ENCODE measurements at regions of chr6 and their contacts with region 1.

Region 1: GRCh38 chr6:141562851-141563763 is 569.6 kb upstream of the GJE1 start:
- DNase-seq: peak; percentile 87
- H3K4me3 Mint-ChIP-seq: peak overlapping the region; percentile 83
- H3K27ac Mint-ChIP-seq: peak overlapping the region; percentile 35
- H3K4me1 Mint-ChIP-seq: peaks cover 19% of the 10 kb centered on the region
- H3K27me3 Mint-ChIP-seq: peaks cover 2% of the 10 kb centered on the region

Region 2: GRCh38 chr6:139881728-139882211 is 1681.3 kb before region 1 on chr6:
- intact Hi-C with region 1: loop called (anchors 5 kb)
- DNase-seq: peak; percentile 71
- H3K4me3 Mint-ChIP-seq: no peak overlapping the region
- H3K27ac Mint-ChIP-seq: no peak overlapping the region
- H3K4me1 Mint-ChIP-seq: peaks cover 4% of the 10 kb centered on the region
- H3K27me3 Mint-ChIP-seq: peaks cover 4% of the 10 kb centered on the region

Region 3: GRCh38 chr6:141153563-141153962 is 409.5 kb before region 1 on chr6:
- intact Hi-C with region 1: loop called (anchors 10 kb)
- DNase-seq: peak; percentile 59
- H3K4me3 Mint-ChIP-seq: no peak overlapping the region
- H3K27ac Mint-ChIP-seq: no peak overlapping the region
- H3K4me1 Mint-ChIP-seq: peaks cover 3% of the 10 kb centered on the region
- H3K27me3 Mint-ChIP-seq: no peaks in the 10 kb centered on the region

Region 4: GRCh38 chr6:141309295-141309694 is 253.8 kb before region 1 on chr6:
- intact Hi-C with region 1: loop called (anchors 1 kb)
- DNase-seq: no peak
- H3K4me3 Mint-ChIP-seq: no peak overlapping the region
- H3K27ac Mint-ChIP-seq: no peak overlapping the region
- H3K4me1 Mint-ChIP-seq: no peaks in the 10 kb centered on the region
- H3K27me3 Mint-ChIP-seq: no peaks in the 10 kb centered on the region

Region 5: DNA sequence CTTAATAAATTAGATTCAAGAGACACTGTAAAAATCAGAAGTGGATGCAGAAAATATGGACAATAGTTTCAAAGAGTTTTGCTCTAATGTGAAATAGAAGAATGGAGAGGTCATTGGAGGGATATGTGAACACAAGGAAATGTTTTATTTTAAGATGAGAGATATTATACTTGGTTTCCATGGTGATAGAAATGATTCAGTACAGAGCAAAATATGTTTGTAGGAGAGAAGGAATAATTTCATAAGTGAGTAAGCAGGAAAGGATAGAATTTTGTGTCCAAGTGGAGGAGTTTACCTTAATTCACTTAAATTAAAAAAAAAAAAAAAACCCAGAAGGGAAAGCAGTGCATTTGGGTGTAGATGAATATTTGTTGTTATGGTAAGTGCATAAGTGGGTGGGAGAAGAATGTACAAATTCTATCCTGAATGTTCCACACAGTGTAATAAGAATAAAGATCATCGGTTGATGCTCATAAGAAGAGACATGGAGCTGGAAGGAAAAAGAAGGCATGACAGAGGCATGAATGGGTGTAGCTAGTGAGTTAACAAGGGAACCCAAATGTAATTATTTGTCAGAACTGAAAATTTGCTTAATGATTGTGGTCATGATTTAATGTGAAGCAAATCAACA is 119.3 kb before region 1 on chr6:
- intact Hi-C with region 1: loop called (anchors 5 kb)
- DNase-seq: no peak
- H3K4me3 Mint-ChIP-seq: no peak overlapping the region
- H3K27ac Mint-ChIP-seq: no peak overlapping the region
- H3K4me1 Mint-ChIP-seq: no peaks in the 10 kb centered on the region
- H3K27me3 Mint-ChIP-seq: peaks cover 5% of the 10 kb centered on the region

Measured in activated CD4-positive, alpha-beta T cell treated with anti-CD3 and anti-CD28 coated beads, Interleukin-2, amount 10 ng/mL, durations not matched to agents 24 days and 14 days (primary cell).